ENCODE measurements at regions of chr6 and their contacts with region 1.

Region 1: GRCh38 chr6:159862103-159862502 is 28.7 kb upstream of the MAS1 start:
- DNase-seq: no peak

Region 2: GRCh38 chr6:159427771-159428170 is 434.3 kb before region 1 on chr6:
- intact Hi-C with region 1: no loop called
- DNase-seq: no peak

Region 3: DNA sequence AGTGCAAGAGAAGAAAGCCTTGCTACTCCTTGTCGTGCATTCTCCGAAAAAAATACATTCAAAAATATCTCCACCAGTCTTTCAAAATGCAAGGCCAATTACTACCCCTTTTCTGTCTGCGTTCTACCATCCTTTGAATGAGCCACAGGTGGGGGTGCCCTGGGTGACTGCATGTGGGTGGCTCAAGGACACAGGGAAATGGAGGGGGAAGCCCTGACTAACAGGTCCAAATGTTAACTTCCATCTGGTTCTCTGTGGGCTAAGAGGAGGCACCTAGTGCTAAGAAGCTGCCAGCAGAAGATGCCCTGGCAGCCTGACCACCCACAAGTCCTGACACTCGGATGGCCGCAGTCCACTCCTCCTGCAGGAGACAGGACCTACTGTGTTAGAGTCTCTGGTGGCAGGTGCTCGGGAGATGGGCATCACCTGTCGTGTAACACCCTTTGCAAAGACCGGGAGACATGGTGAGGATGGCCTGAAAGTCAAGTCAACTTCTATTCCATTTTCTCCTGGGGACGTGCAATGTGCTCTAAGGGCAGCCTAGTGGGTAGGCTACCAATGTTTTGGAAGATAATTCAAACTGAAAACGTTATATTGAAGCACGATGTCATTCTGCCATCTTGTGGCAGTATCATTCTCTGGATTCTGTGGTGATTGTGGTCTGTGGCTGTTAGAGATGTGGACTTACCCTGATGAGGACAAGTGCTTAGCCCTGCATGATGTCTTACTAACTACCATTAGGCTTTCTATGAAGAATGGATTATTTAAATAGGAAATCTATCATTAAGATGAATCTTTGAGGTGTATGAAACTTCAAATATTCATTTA is 79.4 kb after region 1 on chr6:
- intact Hi-C with region 1: loop called (anchors 2 kb)
- DNase-seq: no peak

Region 4: DNA sequence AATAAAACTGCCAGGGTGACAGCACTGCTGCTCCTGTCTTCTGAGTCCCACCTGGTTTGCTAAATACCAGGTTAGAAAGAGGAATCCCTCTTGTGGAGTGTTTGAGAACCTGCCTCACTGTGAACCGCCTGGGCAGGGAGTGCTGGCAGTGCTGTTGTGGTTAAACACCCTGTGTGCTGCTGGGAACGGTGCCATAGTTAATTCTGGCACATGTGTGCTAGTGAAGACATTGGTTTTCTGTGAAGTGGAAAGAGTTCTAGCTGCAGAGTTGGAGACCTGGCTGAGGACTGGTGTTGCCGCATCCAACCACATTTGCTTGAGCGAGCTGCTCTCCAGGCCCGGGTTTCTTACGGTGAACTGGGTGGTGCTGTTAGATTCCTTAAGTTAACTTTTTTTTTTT is 179.5 kb after region 1 on chr6:
- intact Hi-C with region 1: loop called (anchors 5 kb)
- DNase-seq: no peak

Region 5: DNA sequence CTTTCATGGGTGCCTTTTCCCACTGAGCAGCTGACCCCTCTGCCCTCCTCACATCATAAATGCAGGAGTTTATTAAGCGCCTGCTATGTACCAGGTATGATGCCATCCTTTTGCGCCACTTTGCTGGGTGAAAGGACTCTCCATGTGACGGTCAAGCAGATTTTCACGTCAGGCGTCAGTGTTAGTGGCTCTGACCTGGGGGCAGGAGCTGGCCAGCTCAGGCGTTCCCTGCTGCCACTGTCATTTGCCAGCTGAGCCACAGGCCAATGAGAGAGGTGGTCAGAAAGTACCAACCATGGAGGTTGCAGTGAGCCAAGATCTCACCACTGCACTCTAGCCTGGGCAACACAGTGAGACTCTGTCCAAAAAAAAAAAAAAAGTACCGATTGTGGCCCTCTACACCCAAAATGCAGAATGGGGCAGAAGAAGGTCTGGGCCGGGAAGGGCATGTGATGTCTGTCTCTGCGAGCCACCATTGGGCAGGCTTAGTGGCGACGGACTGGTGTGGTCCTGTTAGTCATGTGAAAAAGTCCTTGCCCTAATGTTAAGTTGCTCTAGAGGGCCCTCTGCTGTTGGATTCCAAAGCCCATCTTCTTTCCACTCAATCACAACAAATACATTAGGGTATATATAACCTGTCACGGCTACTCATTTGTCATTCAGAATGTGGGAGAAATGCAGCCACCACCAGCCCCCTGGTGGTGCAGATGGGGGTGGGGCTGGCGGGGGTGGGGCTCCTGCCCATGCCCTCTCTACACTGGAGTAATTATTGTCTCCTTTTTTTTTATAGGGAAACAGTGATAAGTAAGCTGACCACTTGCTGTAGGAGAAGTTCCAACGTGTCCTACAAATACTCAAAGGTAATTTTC is 241.1 kb after region 1 on chr6:
- intact Hi-C with region 1: loop called (anchors 5 kb)
- DNase-seq: peak; percentile 44

Region 6: GRCh38 chr6:160379464-160379863 is 517.4 kb after region 1 on chr6:
- intact Hi-C with region 1: no loop called
- DNase-seq: no peak

Region 7: DNA sequence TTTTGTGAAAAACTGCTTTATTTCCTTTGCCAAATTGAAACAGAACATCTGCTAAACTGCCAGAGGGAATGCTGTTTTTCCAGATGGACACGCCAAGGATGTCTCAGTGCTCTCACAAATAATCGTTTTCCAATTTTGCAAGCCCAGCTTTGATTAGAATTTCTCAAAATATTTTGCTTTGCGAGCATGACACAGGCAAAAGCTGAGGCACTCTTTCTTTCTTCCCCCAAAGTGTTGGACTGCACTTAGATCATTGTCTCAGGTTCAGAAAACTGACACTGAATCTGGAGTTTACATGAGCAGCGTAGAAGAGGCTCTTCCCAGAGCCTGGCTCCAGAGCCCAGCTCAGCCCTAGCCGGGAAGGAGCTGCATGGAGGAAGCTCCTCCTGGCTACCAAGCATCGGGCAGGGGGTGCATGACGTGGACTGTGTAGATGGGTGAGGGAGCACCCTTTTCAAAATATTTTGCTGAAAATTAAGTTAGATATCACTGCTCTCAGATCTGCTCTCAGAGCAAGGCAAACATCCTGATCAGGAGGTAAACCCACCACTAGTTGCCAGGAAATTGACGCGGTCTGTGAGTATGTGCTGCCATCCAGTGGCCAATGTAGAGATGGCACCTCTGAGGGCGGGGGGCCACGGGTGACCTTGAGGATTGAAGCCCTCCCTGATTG is 593.6 kb after region 1 on chr6:
- intact Hi-C with region 1: loop called (anchors 5 kb)
- DNase-seq: no peak

Region 8: GRCh38 chr6:160534050-160534696 is 672.1 kb after region 1 on chr6:
- intact Hi-C with region 1: loop called (anchors 10 kb)
- DNase-seq: no peak

Region 9: DNA sequence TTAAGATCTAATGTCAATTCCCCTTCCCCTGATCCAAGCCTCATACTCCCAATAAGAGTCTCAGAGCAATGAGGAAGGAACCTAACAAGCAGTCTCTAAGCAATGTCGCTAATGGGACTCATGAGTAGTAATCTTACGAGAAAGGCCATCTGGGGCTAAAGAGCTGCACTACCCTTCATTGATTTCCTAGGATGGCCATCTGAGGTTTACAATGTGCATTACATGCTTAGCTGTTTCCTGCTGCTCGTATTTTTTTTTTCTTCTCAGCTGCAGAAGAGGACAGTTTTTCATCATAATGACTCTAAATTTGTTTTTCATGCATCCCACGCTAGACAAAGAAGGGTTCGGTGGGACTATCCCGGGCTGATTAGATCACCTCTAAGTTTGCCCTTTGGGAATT is 682.7 kb after region 1 on chr6:
- intact Hi-C with region 1: no loop called
- DNase-seq: no peak